RWPE1 (cell line): ENCODE measurements at regions of chr18 and their contacts with region 1.

Region 1: GRCh38 chr18:77859634-77860033 is 610.0 kb downstream of the GALR1 start:
- DNase-seq: no peak
- H3K27ac ChIP-seq: no peak overlapping the region
- CTCF ChIP-seq: no peak

Region 2: GRCh38 chr18:77911971-77912605 is 52.5 kb after region 1 on chr18:
- CTCF ChIA-PET with region 1: interaction called, 10 read pairs
- POLR2A ChIA-PET with region 1: no interaction called
- DNase-seq: no peak
- H3K27ac ChIP-seq: no peak overlapping the region
- CTCF ChIP-seq: no peak